Gastrocnemius medialis (tissue), 4 donors: ENCODE measurements at regions of chr10 and their contacts with region 1.

Region 1: GRCh38 chr10:113521123-113521795 is 31.6 kb upstream of the HABP2 start:
- DNase-seq: peak; percentile 46 to 62
- ATAC-seq: peak; percentile 86 to 92
- H3K4me3 ChIP-seq: no peak overlapping the region
- H3K27ac ChIP-seq: no peak overlapping the region
- H3K4me1 ChIP-seq: peaks cover 0 to 3% of the 10 kb centered on the region in 2 donors
- H3K27me3 ChIP-seq: no peaks in the 10 kb centered on the region
- CTCF ChIP-seq: peak; percentile 87 to 98 (median 98)
- POLR2A ChIP-seq: no peak

Region 2: GRCh38 chr10:112949875-112950507 is 571.3 kb before region 1 on chr10 and contains the start of gene TCF7L2:
- in situ Hi-C with region 1: no loop called
- intact Hi-C with region 1: no loop called
- DNase-seq: peak; percentile 88 to 92
- ATAC-seq: peak; percentile 71 to 77
- H3K4me3 ChIP-seq: peak within 1 kb of the TSS; percentile 77 to 84 (median 82)
- H3K27ac ChIP-seq: peak within 1 kb of the TSS; percentile 90 to 96 (median 94)
- H3K4me1 ChIP-seq: peaks cover 18 to 32% of the 10 kb centered on the region in 2 donors
- H3K27me3 ChIP-seq: no peaks in the 10 kb centered on the region
- CTCF ChIP-seq: no peak
- POLR2A ChIP-seq: peak; percentile 59 to 83
- total RNA-seq, gene TCF7L2: 4.6 to 5.1 (median 5.0) TPM

Region 3: GRCh38 chr10:112977426-112977898 is 543.8 kb before region 1 on chr10:
- in situ Hi-C with region 1: no loop called
- intact Hi-C with region 1: no loop called
- DNase-seq: no peak
- ATAC-seq: no peak
- H3K4me3 ChIP-seq: no peak overlapping the region
- H3K27ac ChIP-seq: no peak overlapping the region
- H3K4me1 ChIP-seq: peaks cover 9% of the 10 kb centered on the region in 2 donors
- H3K27me3 ChIP-seq: no peaks in the 10 kb centered on the region
- CTCF ChIP-seq: no peak
- POLR2A ChIP-seq: no peak

Region 4: GRCh38 chr10:113563306-113564088 is 42.2 kb after region 1 on chr10:
- in situ Hi-C with region 1: no loop called
- intact Hi-C with region 1: loop called (anchors 1 kb)
- DNase-seq: peak; percentile 51 to 66
- ATAC-seq: peak; percentile 75 to 86
- H3K4me3 ChIP-seq: peak overlapping the region; percentile 28 to 49 (median 40)
- H3K27ac ChIP-seq: no peak overlapping the region
- H3K4me1 ChIP-seq: peaks cover 5 to 7% of the 10 kb centered on the region in 2 donors
- H3K27me3 ChIP-seq: no peaks in the 10 kb centered on the region
- CTCF ChIP-seq: peak; percentile 94 to 99 (median 96)
- POLR2A ChIP-seq: no peak